ENCODE measurements at regions of chr6 and their contacts with region 1.

Region 1: GRCh38 chr6:53718597-53719460 is 53.3 kb upstream of the KLHL31 start:
- DNase-seq: peak in 4 of 5 donors; percentile 29 to 45 (median 32)
- H3K4me3 ChIP-seq: no peak overlapping the region
- H3K4me3 Mint-ChIP-seq: peak overlapping the region in 1 of 8 donors; percentile 49
- H3K27ac ChIP-seq: no peak overlapping the region
- H3K27ac Mint-ChIP-seq: no peak overlapping the region
- H3K4me1 ChIP-seq: no peaks in the 10 kb centered on the region
- H3K4me1 Mint-ChIP-seq: peaks cover 0 to 4% (median 2%) of the 10 kb centered on the region in 4 donors
- H3K27me3 ChIP-seq: no peaks in the 10 kb centered on the region
- H3K27me3 Mint-ChIP-seq: peaks cover 10 to 20% of the 10 kb centered on the region in 2 donors

Region 2: GRCh38 chr6:53335208-53335994 is 383.4 kb before region 1 on chr6:
- CTCF ChIA-PET with region 1: no interaction called
- POLR2A ChIA-PET with region 1: no interaction called
- intact Hi-C with region 1: no loop called
- DNase-seq: peak; percentile 80 to 92 (median 86)
- H3K4me3 ChIP-seq: peak overlapping the region; percentile 32 to 66
- H3K4me3 Mint-ChIP-seq: peak overlapping the region; percentile 85 to 96 (median 91)
- H3K27ac ChIP-seq: peak overlapping the region; percentile 88
- H3K27ac Mint-ChIP-seq: peak overlapping the region; percentile 95 to 100 (median 99)
- H3K4me1 ChIP-seq: peaks cover 96% of the 10 kb centered on the region
- H3K4me1 Mint-ChIP-seq: peaks cover 80 to 94% (median 87%) of the 10 kb centered on the region in 4 donors
- H3K27me3 ChIP-seq: no peaks in the 10 kb centered on the region
- H3K27me3 Mint-ChIP-seq: no peaks in the 10 kb centered on the region

Region 3: DNA sequence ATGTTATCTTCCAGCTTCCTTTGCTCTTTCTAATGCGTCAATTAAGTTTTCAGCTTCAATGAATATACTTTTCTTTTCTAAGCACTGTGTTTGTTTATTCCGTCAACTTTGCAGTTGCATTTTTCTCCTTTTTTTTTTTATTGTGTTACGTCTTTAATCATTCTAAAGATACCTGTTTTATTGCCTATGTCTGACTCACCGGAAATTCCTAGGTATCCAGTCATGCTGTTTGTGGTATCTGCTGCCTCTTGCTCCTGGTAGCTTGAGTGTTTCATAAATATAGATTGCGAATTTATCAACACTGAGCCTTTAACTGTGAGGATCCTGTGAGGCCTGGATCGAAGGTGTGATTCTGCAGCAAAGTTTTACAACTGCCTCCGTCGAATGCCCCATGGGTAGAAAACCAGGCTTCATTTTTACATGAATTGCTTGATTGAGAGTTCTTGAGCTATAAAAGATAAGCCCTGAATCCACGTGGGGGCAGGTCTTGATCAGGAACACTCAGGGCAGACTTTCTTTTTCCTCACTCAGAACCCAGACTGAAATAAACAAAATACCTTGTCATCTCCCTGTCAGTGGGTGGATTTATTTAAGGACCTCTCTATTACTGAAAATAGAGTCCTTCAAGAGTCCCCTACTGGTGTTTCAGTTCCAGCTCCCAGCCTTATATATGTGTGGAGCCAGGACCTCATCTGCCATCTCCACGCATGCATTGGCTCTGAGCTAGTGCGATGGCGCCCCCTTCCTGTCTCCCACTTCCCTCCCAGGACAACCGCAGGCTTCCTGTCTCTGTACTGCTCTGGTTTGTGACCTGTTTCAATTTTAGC is 15.9 kb after region 1 on chr6:
- CTCF ChIA-PET with region 1: interaction called, 107 read pairs
- POLR2A ChIA-PET with region 1: no interaction called
- intact Hi-C with region 1: no loop called
- DNase-seq: peak in 1 of 5 donors; percentile 14
- H3K4me3 ChIP-seq: no peak overlapping the region
- H3K4me3 Mint-ChIP-seq: peak overlapping the region in 1 of 8 donors; percentile 29
- H3K27ac ChIP-seq: no peak overlapping the region
- H3K27ac Mint-ChIP-seq: peak overlapping the region in 1 of 7 donors; percentile 16
- H3K4me1 ChIP-seq: peaks cover 26% of the 10 kb centered on the region
- H3K4me1 Mint-ChIP-seq: peaks cover 11 to 25% (median 22%) of the 10 kb centered on the region in 4 donors
- H3K27me3 ChIP-seq: no peaks in the 10 kb centered on the region
- H3K27me3 Mint-ChIP-seq: peaks cover 0 to 9% of the 10 kb centered on the region in 2 donors